Posterior vena cava (tissue), 2 donors: ENCODE measurements at regions of chr14 and their contacts with region 1.

Region 1: DNA sequence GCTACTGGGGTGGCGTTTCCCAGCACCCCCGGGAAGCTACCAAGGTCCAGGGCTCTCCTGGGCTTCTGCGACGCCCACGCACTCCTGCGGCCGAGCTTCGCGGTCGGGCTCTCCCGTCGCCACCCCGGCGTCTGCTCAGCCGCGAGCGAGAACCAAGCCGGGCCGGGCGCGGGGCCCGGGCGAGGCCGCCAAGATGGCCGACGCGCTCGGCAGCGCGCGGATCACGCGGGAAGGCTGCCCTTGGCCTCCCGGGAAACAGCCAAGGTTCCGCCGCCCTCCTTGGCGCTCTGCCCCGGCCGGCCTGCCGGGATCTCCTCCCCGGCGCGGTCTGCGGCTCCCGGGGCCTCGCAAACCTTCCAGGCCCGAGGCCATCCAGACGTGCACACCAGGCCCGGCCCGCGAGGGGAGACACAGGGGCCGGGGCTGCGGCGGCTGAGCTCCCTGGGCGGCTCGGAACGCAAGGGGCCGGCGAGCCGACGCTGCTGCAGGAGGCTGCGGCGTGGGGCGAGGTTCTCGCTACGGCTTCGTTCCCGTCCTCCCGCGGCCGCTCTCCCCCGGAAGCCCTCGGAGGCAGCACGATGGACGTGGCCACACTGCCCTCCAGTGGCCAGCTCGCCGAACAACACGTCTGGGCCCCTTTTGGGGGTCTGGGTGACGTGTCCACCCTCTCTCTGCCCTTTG is 23.5 kb upstream of the ZFP36L1 start:
- DNase-seq: peak; percentile 97

Region 2: GRCh38 chr14:67934008-67934481 is 882.4 kb before region 1 on chr14:
- intact Hi-C with region 1: loop called in 1 of 2 experiments (anchors 5 kb)
- DNase-seq: no peak

Region 3: DNA sequence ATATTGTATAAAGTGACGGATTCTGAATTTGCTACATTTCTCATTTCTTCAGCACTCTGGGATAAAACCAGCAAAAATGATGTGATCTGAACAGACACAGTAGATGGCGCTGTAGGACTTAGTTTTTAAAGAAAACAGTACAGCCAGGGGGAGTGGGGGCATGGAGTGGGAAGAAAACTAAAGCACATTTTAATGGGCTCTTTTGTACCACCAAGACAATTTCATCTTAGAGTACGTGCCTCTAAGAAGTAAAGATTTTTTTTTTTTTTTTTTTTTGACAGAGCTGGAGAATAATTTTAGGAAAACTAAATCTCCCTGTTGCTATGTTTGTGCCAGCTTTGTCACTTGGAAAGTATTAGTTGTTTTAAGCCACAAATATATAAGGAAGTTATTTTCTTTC is 872.5 kb before region 1 on chr14:
- intact Hi-C with region 1: loop called in 1 of 2 experiments (anchors 5 kb)
- DNase-seq: no peak

Region 4: GRCh38 chr14:68248481-68249255 is 567.7 kb before region 1 on chr14:
- intact Hi-C with region 1: loop called (anchors 10 kb)
- DNase-seq: no peak

Region 5: DNA sequence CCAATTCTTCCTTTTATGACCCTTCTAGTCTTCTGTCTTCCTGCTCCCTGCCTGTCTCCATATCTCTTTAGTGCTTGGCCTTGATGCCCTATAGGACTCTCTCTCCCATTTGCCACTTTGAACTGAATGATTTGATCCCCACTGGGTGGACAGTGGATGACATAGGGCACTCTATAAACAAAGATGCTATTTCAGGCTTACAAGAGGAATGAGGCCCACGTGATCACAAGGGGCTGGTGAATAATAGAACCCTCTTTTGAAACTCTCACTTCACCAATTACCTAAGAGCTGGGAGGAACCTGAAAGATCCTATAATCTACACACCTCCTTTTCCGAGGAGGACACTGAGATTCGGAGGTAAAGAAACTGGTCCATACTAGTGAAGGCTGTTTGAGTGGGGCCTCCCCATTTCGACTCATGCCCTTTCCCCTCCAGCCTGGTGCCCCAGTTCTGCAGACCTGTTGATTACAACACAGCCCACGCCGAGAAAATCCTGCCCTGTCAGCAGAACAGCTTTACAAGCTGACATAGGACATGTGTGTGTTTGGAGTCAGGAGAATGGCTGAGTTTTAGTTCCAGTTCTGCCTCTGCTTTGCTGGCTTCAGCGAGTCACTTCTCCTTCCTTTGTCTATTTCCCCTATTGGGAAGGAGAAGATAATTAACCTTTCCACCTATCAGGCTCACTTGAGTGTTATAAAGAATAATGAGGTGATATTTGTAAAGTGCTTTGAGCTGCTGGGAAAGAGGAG is 423.8 kb before region 1 on chr14:
- intact Hi-C with region 1: loop called in 1 of 2 experiments (anchors 10 kb)
- DNase-seq: peak; percentile 85

Region 6: GRCh38 chr14:68795597-68796417 is 20.6 kb before region 1 on chr14:
- intact Hi-C with region 1: loop called in 1 of 2 experiments (anchors 2 kb)
- DNase-seq: peak; percentile 95

Region 7: GRCh38 chr14:68926236-68926635 is 109.8 kb after region 1 on chr14:
- intact Hi-C with region 1: no loop called
- DNase-seq: no peak